ENCODE measurements at regions of chr1 and their contacts with region 1.

Region 1: DNA sequence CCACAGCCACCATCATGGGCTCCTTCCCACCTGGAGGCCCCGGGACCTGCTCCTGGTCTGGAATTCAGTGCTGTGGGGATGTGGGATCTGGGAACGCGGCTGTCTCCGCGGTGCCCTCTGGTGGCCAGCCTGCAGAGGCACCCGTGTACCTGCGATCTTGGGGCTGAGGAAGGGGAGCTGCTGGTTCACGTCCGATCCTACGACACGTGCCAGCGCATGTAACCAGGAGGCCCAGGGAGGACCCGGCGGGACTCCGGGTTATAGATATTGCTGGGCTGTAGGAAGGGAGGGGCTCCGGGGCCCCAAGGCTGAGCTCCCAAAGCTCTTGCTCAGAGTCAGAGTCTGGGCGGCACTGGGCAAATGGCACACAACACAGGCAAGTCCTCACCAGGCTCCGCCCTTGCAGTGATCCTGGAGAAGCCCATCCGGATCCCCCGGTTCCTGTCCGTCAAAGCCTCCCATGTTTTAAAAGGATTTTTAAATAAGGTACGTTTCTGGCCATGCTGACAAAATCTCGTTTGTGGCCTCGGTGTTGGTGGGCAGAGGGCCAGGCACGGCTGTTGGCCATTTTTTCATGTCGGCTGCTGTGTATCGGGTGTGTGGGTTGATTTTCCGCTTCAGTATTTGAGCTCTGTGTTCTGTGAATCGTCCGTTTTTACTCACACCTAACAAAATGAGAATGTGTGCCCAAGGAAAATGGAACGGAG is 20.1 kb downstream of the FAAP20 start:
- DNase-seq: peak in 1 of 2 donors; percentile 83
- ATAC-seq: peak; percentile 51
- H3K4me3 ChIP-seq: peak overlapping the region in 1 of 2 donors; percentile 1
- H3K27ac ChIP-seq: no peak overlapping the region
- H3K4me1 ChIP-seq: no peaks in the 10 kb centered on the region
- H3K27me3 ChIP-seq: no peaks in the 10 kb centered on the region

Region 2: DNA sequence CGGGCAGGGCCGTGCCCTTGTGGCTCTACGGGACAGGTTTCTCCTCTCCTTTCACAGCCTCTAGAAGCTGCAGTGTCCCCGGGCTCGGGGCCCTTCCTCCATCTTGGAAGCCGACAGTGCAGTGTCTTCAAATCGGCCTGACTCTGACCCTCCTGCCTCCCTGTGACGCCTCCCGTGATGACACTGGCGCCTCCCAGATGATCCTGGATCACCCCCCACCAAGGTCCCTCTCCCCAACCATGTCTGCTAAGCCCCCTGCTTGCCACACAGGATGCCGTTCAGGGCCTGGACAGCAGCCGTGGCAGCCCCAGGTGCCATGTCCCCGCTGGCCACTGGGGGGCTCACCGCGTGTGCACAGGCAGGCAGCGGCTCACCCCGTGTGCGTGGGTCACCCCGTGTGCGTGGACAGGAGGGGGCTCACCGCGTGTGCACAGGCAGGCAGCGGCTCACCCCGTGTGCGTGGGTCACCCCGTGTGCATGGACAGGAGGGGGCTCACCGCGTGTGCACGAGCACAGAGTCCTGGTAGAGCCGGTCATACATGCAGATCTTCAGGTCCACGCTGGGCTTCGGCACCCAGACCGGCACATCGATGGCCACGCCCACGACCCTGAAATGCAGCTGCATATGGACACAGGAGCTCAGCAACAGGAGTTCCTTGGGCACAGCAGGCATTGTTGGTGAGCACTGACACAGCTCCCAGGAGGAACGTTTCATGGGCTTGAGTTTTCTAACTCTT is 230.5 kb before region 1 on chr1:
- intact Hi-C with region 1: loop called in 1 of 2 experiments (anchors 5 kb)
- DNase-seq: peak; percentile 48 to 85
- ATAC-seq: peak; percentile 69
- H3K4me3 ChIP-seq: no peak overlapping the region
- H3K27ac ChIP-seq: no peak overlapping the region
- H3K4me1 ChIP-seq: no peaks in the 10 kb centered on the region
- H3K27me3 ChIP-seq: no peaks in the 10 kb centered on the region

Region 3: GRCh38 chr1:2091611-2092604 is 82.6 kb before region 1 on chr1:
- intact Hi-C with region 1: loop called (anchors 5 kb)
- DNase-seq: no peak
- ATAC-seq: no peak
- H3K4me3 ChIP-seq: no peak overlapping the region
- H3K27ac ChIP-seq: no peak overlapping the region
- H3K4me1 ChIP-seq: no peaks in the 10 kb centered on the region
- H3K27me3 ChIP-seq: no peaks in the 10 kb centered on the region

Region 4: GRCh38 chr1:2148691-2149090 is 25.8 kb before region 1 on chr1:
- intact Hi-C with region 1: no loop called
- DNase-seq: no peak
- ATAC-seq: no peak
- H3K4me3 ChIP-seq: no peak overlapping the region
- H3K27ac ChIP-seq: no peak overlapping the region
- H3K4me1 ChIP-seq: no peaks in the 10 kb centered on the region
- H3K27me3 ChIP-seq: no peaks in the 10 kb centered on the region

Region 5: DNA sequence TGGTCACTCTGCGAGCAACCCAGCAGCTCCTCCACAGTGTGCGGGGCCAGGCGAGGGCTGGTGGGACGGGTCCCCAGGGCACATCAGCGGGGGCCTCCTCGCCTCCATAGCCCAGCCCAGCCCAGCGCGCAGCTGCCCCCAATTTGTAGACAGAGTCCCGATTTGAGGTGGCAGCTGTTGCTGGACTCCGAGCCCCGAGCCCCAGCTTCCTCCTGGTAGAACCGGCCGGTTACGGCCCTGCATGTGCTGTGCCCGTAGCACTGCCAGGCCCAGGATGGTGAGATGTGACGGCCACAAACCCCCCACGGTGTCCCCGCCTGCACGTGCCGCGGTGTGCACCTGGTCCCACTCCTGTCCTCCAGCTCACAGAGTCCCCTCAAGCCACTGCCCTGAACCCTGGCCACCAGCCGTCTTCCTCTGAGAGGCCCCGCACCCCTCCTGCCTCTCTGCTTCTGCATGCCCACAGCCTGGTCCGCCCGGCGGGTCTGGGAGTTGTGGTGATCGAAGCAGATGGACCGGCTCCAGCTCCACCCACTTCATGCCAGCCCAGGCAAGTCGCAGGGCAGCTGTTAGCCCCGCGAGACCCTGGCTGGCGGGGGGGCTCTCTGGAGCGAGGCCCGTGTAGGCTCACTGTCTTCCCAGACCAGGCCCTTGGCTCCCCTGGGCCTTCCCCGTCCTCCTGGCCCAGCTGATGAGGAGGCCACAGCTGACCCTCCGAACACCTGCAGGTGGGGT is 161.4 kb after region 1 on chr1:
- intact Hi-C with region 1: no loop called
- DNase-seq: no peak
- ATAC-seq: no peak
- H3K4me3 ChIP-seq: no peak overlapping the region
- H3K27ac ChIP-seq: no peak overlapping the region
- H3K4me1 ChIP-seq: no peaks in the 10 kb centered on the region
- H3K27me3 ChIP-seq: no peaks in the 10 kb centered on the region